Body of pancreas (tissue), 4 donors: ENCODE measurements at regions of chr17 and their contacts with region 1.

Region 1: DNA sequence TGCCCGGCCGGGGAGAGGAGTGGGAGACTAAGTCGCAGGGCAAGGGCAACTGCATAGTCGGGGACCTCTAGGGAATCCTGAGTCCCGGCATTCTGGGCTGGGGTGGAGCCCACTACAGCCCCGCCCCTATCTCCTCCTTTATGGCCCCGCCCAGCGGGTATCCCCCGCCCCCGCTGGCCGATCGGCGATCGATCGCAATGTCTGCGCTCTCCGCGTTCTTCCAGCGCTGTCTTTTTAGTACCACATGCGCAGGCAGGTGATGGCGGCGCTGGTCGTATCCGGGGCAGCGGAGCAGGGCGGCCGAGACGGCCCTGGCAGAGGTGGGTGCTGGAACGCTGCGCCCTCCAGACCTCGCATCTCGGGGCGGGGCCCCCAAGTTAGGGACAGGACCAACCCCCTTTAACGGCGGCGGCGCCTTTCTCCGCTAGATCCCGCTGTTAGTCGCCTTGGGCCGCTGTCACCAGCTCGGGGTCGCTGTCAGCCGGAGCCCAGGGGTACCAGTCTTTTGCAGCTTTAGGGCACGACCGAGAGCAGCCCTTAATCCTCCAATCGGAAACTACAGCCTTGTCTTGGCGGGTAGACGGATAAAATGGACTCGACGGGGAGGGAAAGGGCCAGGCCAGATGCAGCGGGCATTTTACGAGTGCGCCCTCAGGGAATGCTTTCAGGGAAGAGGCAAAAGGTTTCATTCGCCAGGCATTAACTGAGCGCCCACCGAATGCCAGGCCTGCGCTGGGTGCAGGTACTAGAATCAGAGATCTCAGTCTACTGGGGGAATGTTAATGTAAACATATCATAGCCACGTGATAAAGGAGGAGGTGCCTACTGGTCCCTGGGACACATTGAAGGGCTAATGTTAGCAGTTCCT is at the start of gene DPH1:
- DNase-seq: peak; percentile 89 to 92 (median 91)
- ATAC-seq: peak; percentile 84
- H3K4me3 ChIP-seq: peak within 1 kb of the TSS; percentile 66 to 100
- H3K27ac ChIP-seq: peak within 1 kb of the TSS; percentile 6 to 75 (median 35)
- H3K4me1 ChIP-seq: peaks cover 38% of the 10 kb centered on the region
- H3K27me3 ChIP-seq: no peaks in the 10 kb centered on the region
- CTCF ChIP-seq: peak in 2 of 7 experiments; percentile 7 to 29
- POLR2A ChIP-seq: peak; percentile 27 to 76 (median 72)
- total RNA-seq, gene DPH1: 34.8 to 77.8 TPM

Region 2: GRCh38 chr17:1908699-1909309 is 121.3 kb before region 1 on chr17:
- intact Hi-C with region 1: loop called (anchors 5 kb)
- DNase-seq: peak; percentile 74 to 83 (median 76)
- ATAC-seq: peak; percentile 92
- H3K4me3 ChIP-seq: no peak overlapping the region
- H3K27ac ChIP-seq: no peak overlapping the region
- H3K4me1 ChIP-seq: peaks cover 11% of the 10 kb centered on the region
- H3K27me3 ChIP-seq: peaks cover 0 to 14% of the 10 kb centered on the region in 2 donors
- CTCF ChIP-seq: peak; percentile 63 to 91 (median 77)
- POLR2A ChIP-seq: no peak

Region 3: DNA sequence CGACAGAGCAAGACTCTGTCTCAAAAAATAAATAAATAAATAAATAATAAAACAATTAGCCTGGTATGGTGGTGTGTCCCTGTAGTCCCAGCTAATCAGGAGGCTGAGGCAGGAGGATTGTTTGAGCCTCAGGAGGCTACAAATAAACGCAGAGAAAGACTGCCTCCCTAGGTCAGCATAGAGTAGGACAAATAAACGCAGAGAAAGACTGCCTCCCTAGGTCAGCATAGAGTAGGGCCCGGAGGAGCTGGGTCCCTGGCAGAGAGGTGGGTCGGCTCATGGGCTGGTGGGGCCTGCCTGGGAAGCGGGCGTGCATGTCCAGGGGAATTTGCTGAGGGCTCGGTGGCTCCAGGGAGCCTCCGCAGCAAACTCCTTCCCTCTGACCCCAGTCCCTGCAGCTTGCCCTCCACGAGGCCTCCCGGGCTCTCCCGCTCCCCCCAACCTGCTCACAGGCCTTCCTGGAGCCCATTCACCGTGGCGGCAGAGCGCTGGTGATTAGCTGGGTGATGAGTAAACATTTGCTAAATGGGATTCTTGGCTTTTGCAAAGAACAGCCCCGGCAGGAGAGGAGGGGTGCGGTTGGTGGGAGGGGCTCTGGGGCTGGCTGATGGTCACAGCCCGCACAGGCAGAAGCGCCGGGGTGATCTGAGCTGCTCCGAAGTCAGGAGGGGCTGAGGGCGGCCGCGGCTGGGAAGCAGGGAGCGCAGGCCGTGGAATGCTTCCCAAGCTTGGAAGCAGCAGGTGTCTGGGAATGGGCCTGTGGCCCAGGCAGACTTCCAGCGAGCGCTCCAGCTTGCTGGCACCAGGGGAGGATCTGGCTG is 98.2 kb before region 1 on chr17:
- intact Hi-C with region 1: no loop called
- DNase-seq: peak; percentile 38 to 73 (median 66)
- ATAC-seq: peak; percentile 66
- H3K4me3 ChIP-seq: no peak overlapping the region
- H3K27ac ChIP-seq: peak overlapping the region in 3 of 4 donors; percentile 37 to 61 (median 60)
- H3K4me1 ChIP-seq: peaks cover 8% of the 10 kb centered on the region
- H3K27me3 ChIP-seq: no peaks in the 10 kb centered on the region
- CTCF ChIP-seq: no peak
- POLR2A ChIP-seq: no peak

Region 4: DNA sequence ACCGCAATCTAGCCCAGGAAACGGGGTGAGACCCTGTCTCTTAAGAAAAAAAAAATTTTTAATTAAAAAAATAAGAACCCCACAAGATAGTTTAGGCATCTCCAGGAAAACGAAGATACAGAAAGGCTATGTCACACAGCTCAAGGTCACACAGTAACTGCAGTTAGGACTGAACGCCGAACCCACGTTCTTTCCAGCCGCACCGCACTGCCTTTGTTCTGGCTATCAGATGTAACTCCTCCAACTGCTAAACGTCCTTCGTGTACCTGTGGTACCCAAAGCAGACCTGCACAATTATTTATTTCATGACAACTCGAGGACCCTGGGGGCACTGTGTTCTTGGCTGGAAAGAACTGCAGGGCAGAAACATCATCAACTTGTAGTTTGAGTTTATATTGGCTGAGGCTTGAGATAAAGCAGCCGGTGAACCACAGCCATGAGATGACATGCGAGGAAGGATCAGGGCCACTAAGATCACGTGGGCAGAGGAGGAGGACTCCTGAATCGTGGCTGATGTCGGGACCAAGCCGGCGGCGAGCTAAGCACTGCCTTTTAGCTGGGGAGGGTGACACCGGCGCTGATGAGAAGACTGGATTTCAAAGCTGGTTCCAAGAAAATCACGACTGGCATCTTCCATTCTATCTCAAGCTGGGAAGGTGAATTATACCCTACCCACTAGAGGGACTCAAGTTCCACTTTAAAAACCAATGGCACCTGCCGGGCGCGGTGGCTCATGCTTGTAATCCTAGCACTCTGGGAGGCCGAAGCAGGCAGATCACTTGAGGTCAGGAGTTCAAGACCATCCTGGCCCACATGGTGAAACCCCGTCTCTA is 391.4 kb after region 1 on chr17:
- intact Hi-C with region 1: no loop called
- DNase-seq: peak; percentile 50 to 69 (median 52)
- ATAC-seq: peak; percentile 52
- H3K4me3 ChIP-seq: no peak overlapping the region
- H3K27ac ChIP-seq: no peak overlapping the region
- H3K4me1 ChIP-seq: peaks cover 20% of the 10 kb centered on the region
- H3K27me3 ChIP-seq: no peaks in the 10 kb centered on the region
- CTCF ChIP-seq: peak in 4 of 7 experiments; percentile 43 to 52 (median 45)
- POLR2A ChIP-seq: no peak

Region 5: DNA sequence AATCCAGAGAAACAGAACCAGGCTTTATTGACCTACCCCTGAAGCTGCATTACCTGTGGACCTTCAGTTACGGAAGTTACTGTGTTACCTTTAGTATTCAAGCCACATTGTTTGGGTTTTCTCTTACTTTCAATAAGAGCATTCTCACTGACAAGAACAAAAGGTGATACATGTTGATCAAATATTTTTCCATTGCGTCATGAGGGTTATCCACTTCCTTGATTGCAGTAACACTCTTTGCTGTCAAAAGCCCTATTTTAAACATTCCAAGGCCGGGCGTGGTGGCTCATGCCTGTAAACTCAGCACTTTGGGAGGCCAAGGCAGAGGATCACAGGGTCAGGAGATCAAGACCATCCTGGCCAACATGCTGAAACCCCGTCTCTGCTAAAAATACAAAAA is 534.7 kb after region 1 on chr17:
- intact Hi-C with region 1: no loop called
- DNase-seq: peak; percentile 8 to 35 (median 16)
- ATAC-seq: peak; percentile 79
- H3K4me3 ChIP-seq: no peak overlapping the region
- H3K27ac ChIP-seq: peak overlapping the region in 3 of 4 donors; percentile 58 to 65 (median 58)
- H3K4me1 ChIP-seq: no peaks in the 10 kb centered on the region
- H3K27me3 ChIP-seq: no peaks in the 10 kb centered on the region
- CTCF ChIP-seq: no peak
- POLR2A ChIP-seq: no peak